GM12878 (cell line): ENCODE measurements at regions of chr22 and their contacts with region 1.

Region 1: DNA sequence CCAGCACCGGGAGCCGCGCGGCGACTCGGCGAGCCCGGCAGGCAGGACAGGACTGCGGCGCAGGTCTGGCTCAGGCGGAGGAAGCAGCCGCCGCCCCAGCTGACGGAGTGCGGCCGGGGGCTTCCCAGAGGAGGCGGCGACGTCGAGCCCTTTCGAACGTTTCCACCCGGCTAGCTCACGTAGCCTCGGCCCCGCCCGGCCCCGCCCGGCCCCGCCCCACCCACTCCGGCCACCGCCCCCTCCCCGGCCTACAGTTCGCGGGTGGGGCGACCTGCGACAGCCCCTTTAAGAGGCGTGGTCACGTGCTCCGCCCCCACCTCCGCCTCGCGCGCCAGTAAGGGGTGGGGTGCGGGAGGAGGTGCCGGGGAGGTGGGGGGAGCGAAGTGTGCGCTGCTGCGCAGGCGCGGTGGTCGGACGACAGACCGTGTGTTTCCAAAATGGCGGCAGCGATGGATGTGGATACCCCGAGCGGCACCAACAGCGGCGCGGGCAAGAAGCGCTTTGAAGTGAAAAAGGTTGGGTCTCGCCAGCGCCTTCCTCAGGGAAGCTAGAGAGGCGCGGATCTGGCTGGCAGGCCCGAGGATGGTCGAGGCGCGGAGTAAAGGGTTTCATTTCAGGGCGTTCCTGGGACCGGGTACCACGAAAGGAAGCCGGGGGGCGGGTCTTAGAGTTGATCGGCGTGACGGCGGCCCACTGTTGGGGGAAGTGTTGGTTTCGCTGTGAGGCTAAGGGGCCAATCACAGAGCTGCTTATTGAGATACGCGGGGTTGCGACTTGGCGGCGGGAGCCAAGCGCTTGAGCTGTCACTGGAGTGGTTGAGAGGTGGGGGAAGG is at the start of gene RBX1:
- DNase-seq: peak; percentile 93
- ATAC-seq: peak; percentile 92
- H3K4me3 ChIP-seq: peak within 1 kb of the TSS; percentile 98
- H3K27ac ChIP-seq: peak within 1 kb of the TSS; percentile 99
- H3K4me1 ChIP-seq: peaks cover 2% of the 10 kb centered on the region; the same call in 1 of the 2 replicates
- H3K27me3 ChIP-seq: no peaks in the 10 kb centered on the region
- CTCF ChIP-seq: no peak
- EP300 ChIP-seq: no peak; a peak in 1 of 4 replicates
- POLR2A ChIP-seq: peak; percentile 99
- RAD21 ChIP-seq: 0 out of 2 replicates have a peak, but pooled peaks have one; percentile 1
- polyA plus RNA-seq, gene RBX1: 449 to 468 TPM

Region 2: GRCh38 chr22:40791241-40791640 is 159.9 kb before region 1 on chr22:
- CTCF ChIA-PET with region 1: no interaction called
- POLR2A ChIA-PET with region 1: no interaction called
- RAD21 ChIA-PET with region 1: no interaction called
- SMC1A ChIA-PET with region 1: no interaction called
- in situ Hi-C with region 1: no loop called
- intact Hi-C with region 1: no loop called
- DNase-seq: no peak
- ATAC-seq: no peak
- H3K4me3 ChIP-seq: no peak overlapping the region
- H3K27ac ChIP-seq: no peak overlapping the region
- H3K4me1 ChIP-seq: no peaks in the 10 kb centered on the region; the same call in 1 of the 2 replicates
- H3K27me3 ChIP-seq: no peaks in the 10 kb centered on the region
- CTCF ChIP-seq: no peak
- EP300 ChIP-seq: no peak
- POLR2A ChIP-seq: no peak
- RAD21 ChIP-seq: no peak

Region 3: DNA sequence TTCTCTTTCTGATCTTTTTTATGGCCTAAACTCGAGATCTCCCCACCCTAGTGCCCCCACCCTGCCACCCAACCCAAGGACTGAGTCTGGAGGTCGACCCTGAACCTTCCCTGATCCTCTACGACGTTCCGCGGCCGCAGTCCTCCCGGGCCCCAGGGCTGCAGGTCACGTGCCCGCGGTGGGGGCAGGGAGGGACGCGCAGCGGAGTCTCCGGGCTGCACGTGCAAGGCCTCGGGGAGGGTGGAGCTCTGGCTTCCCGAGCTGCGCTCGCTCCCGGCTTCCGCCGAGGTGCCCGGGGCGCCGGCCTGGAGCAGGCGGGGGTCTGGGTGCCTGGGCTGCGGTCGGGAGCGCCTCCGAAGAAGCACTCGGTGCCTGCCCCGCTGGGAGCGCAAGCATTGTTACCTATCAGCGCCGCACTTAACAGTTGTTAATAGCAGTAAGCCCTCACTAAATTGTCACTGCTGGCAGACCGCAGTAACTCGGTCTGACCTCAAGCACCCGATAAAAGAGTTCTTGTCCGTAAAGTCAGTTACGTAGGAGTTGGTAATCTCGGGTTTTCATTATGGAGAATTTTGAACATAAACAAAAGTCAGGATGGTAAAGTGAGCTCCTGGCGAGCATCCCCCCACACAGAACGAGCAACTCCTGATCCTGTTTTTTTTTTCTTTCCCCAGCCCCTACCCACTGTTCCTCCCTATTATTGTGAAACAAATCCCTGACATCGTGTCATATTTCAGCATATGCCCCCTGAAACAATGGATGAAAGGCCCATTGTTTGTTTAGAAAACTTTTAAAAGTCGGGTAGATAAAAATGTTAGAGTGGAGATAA is 71.5 kb after region 1 on chr22:
- CTCF ChIA-PET with region 1: interaction called, 6 read pairs
- POLR2A ChIA-PET with region 1: interaction called, 18 read pairs
- RAD21 ChIA-PET with region 1: interaction called, 7 read pairs
- SMC1A ChIA-PET with region 1: interaction called, 5 read pairs
- in situ Hi-C with region 1: no loop called
- intact Hi-C with region 1: loop called (anchors 5 kb)
- DNase-seq: peak; percentile 24
- ATAC-seq: peak; percentile 86
- H3K4me3 ChIP-seq: peak overlapping the region; percentile 75
- H3K27ac ChIP-seq: 0 out of 2 replicates have a peak overlapping the region, but pooled peaks have one; percentile 29
- H3K4me1 ChIP-seq: peaks cover 7% of the 10 kb centered on the region
- H3K27me3 ChIP-seq: no peaks in the 10 kb centered on the region; a peak in 1 of 4 replicates
- CTCF ChIP-seq: no peak
- EP300 ChIP-seq: 0 out of 4 replicates have a peak, but pooled peaks of 1 of the 2 experiments have one; percentile 16
- POLR2A ChIP-seq: peak; percentile 69; the same call in 1 of the 2 replicates
- RAD21 ChIP-seq: no peak

Region 4: GRCh38 chr22:41070665-41071331 is 119.6 kb after region 1 on chr22:
- CTCF ChIA-PET with region 1: interaction called, 3 read pairs
- POLR2A ChIA-PET with region 1: interaction called, 13 read pairs
- RAD21 ChIA-PET with region 1: interaction called, 4 read pairs
- SMC1A ChIA-PET with region 1: interaction called, 4 read pairs
- in situ Hi-C with region 1: no loop called
- intact Hi-C with region 1: loop called (anchors 1 kb)
- DNase-seq: no peak
- ATAC-seq: no peak
- H3K4me3 ChIP-seq: no peak overlapping the region
- H3K27ac ChIP-seq: no peak overlapping the region
- H3K4me1 ChIP-seq: peaks cover 16% of the 10 kb centered on the region
- H3K27me3 ChIP-seq: no peaks in the 10 kb centered on the region
- CTCF ChIP-seq: no peak
- EP300 ChIP-seq: no peak
- POLR2A ChIP-seq: no peak
- RAD21 ChIP-seq: no peak

Region 5: DNA sequence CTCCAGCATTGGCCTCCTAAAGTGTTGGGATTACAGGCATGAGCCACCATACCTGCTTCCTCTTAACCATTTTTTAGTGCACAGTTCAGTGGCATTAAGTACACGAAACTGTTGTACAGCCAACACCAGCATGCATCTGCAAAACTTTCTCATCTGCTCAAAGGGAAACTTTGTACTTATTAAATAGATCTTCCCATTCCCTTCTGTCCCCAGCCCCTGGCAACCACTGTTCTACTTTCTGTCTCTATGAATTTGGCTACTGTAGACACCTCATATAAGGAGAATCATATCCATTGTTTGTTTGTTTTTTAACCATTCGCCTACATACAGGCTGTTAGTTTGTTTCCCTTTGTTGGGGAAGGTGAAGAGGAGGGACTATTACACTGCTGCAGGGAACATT is 134.7 kb after region 1 on chr22:
- CTCF ChIA-PET with region 1: no interaction called
- POLR2A ChIA-PET with region 1: interaction called, 20 read pairs
- RAD21 ChIA-PET with region 1: interaction called, 8 read pairs
- SMC1A ChIA-PET with region 1: interaction called, 4 read pairs
- in situ Hi-C with region 1: loop called (anchors 5 kb)
- intact Hi-C with region 1: loop called (anchors 1 kb)
- DNase-seq: no peak
- ATAC-seq: no peak
- H3K4me3 ChIP-seq: no peak overlapping the region
- H3K27ac ChIP-seq: no peak overlapping the region
- H3K4me1 ChIP-seq: no peaks in the 10 kb centered on the region
- H3K27me3 ChIP-seq: no peaks in the 10 kb centered on the region
- CTCF ChIP-seq: no peak
- EP300 ChIP-seq: no peak
- POLR2A ChIP-seq: no peak
- RAD21 ChIP-seq: no peak

Region 6: GRCh38 chr22:41091132-41092022 is 140.2 kb after region 1 on chr22:
- CTCF ChIA-PET with region 1: interaction called, 8 read pairs
- POLR2A ChIA-PET with region 1: interaction called, 31 read pairs
- RAD21 ChIA-PET with region 1: interaction called, 42 read pairs
- SMC1A ChIA-PET with region 1: interaction called, 30 read pairs
- in situ Hi-C with region 1: loop called (anchors 5 kb)
- intact Hi-C with region 1: loop called (anchors 1 kb)
- DNase-seq: peak; percentile 92
- ATAC-seq: peak; percentile 88
- H3K4me3 ChIP-seq: peak overlapping the region; percentile 95
- H3K27ac ChIP-seq: peak overlapping the region; percentile 98
- H3K4me1 ChIP-seq: no peaks in the 10 kb centered on the region; the same call in 1 of the 2 replicates
- H3K27me3 ChIP-seq: no peaks in the 10 kb centered on the region
- CTCF ChIP-seq: no peak
- EP300 ChIP-seq: no peak; a peak in 1 of 4 replicates
- POLR2A ChIP-seq: peak; percentile 90
- RAD21 ChIP-seq: no peak

Region 7: DNA sequence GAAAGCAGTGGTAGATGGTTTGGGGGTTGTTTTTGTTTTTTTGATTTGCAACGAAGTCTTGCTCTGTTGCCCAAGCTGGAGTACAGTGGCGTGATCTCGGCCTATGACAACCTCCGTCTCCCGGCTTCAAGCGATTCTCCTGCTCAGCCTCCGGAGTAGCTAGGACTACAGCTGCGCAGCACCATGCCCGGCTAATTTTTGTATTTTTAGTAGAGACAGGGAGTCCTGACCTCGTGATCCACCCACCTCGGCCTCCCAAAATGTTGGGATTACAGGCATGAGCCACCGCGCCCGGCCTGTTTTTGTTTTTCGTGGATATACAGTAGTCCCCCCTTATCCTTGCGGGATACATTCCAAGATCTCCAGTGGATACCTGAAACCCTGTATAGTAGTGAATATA is 147.9 kb after region 1 on chr22:
- CTCF ChIA-PET with region 1: interaction called, 8 read pairs
- POLR2A ChIA-PET with region 1: interaction called, 31 read pairs
- RAD21 ChIA-PET with region 1: interaction called, 42 read pairs
- SMC1A ChIA-PET with region 1: interaction called, 30 read pairs
- in situ Hi-C with region 1: no loop called
- intact Hi-C with region 1: no loop called
- DNase-seq: no peak
- ATAC-seq: no peak
- H3K4me3 ChIP-seq: no peak overlapping the region
- H3K27ac ChIP-seq: no peak overlapping the region
- H3K4me1 ChIP-seq: no peaks in the 10 kb centered on the region; the same call in 1 of the 2 replicates
- H3K27me3 ChIP-seq: no peaks in the 10 kb centered on the region
- CTCF ChIP-seq: no peak
- EP300 ChIP-seq: no peak
- POLR2A ChIP-seq: no peak
- RAD21 ChIP-seq: no peak

Region 8: DNA sequence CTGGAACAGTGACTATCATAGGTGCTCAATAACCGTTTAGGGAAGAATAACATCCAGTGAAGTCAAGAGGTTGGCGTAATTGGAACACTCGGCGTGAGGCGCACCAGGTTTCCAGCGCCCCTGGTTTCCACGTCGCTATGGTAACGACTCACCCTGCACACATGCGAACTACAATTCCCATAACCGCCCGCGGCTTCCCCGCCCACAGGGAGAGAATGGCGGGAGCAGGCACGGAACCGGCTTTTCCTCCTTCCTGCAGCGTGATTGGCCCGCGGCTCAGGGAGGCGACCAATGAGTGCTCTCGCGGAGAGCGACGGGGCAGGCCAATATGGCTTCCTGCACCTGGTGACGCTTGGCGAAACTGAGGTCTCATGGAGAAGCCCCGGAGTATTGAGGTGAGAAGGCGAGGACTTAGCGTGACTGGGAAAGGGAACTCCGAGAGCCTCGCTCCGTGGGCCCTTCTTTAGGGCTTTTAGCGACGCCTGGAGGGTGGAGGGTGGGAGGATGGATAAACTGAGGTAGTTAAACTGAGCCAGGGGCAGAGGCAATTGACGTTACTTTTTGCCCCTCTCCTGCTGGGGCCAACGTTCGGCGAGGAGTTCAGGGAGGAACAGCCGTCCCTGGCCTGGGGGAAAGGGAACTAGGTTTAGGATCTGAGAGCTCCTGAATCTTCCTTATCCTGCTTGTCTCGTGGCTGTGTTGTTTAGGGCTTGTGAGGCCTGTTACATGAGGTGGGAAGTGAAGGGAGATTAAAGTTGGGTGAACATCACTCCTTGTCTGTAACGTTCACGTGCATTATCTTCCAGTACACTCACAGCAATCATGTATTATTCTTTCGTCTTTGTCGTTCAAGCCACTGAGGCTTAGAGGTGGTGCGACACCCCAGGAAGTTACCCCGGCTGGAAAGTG is 254.1 kb after region 1 on chr22 and contains the start of gene L3MBTL2:
- CTCF ChIA-PET with region 1: interaction called, 3 read pairs
- POLR2A ChIA-PET with region 1: interaction called, 11 read pairs
- RAD21 ChIA-PET with region 1: no interaction called
- SMC1A ChIA-PET with region 1: no interaction called
- in situ Hi-C with region 1: no loop called
- intact Hi-C with region 1: no loop called
- DNase-seq: peak; percentile 88
- ATAC-seq: peak; percentile 100
- H3K4me3 ChIP-seq: peak within 1 kb of the TSS; percentile 93
- H3K27ac ChIP-seq: peak within 1 kb of the TSS; percentile 93
- H3K4me1 ChIP-seq: no peaks in the 10 kb centered on the region
- H3K27me3 ChIP-seq: no peaks in the 10 kb centered on the region
- CTCF ChIP-seq: peak in 1 of 3 experiments; percentile 18; a peak in 1 of 6 replicates
- EP300 ChIP-seq: no peak
- POLR2A ChIP-seq: peak; percentile 88
- RAD21 ChIP-seq: no peak
- polyA plus RNA-seq, gene L3MBTL2: 13.2 to 17.6 TPM

Region 9: GRCh38 chr22:41417622-41418390 is 466.6 kb after region 1 on chr22:
- CTCF ChIA-PET with region 1: no interaction called
- POLR2A ChIA-PET with region 1: no interaction called
- RAD21 ChIA-PET with region 1: no interaction called
- SMC1A ChIA-PET with region 1: no interaction called
- in situ Hi-C with region 1: no loop called
- intact Hi-C with region 1: no loop called
- DNase-seq: no peak
- ATAC-seq: no peak
- H3K4me3 ChIP-seq: no peak overlapping the region
- H3K27ac ChIP-seq: no peak overlapping the region
- H3K4me1 ChIP-seq: peaks cover 11% of the 10 kb centered on the region
- H3K27me3 ChIP-seq: no peaks in the 10 kb centered on the region
- CTCF ChIP-seq: no peak
- EP300 ChIP-seq: no peak
- POLR2A ChIP-seq: no peak
- RAD21 ChIP-seq: no peak